Activated CD8-positive, alpha-beta memory T cell treated with anti-CD3 and anti-CD28 coated beads, Interleukin-2, amount 10 ng/mL, durations not matched to agents 7 days and 5 days (primary cell): ENCODE measurements at regions of chr19 and their contacts with region 1.

Region 1: GRCh38 chr19:51259348-51260245 is 8.7 kb downstream of the SIGLECL1 start:
- DNase-seq: peak; percentile 83
- ATAC-seq: peak; percentile 38
- H3K4me3 Mint-ChIP-seq: no peak overlapping the region
- H3K27ac Mint-ChIP-seq: no peak overlapping the region
- H3K4me1 Mint-ChIP-seq: peaks cover 41% of the 10 kb centered on the region
- H3K27me3 Mint-ChIP-seq: peaks cover 37% of the 10 kb centered on the region

Region 2: DNA sequence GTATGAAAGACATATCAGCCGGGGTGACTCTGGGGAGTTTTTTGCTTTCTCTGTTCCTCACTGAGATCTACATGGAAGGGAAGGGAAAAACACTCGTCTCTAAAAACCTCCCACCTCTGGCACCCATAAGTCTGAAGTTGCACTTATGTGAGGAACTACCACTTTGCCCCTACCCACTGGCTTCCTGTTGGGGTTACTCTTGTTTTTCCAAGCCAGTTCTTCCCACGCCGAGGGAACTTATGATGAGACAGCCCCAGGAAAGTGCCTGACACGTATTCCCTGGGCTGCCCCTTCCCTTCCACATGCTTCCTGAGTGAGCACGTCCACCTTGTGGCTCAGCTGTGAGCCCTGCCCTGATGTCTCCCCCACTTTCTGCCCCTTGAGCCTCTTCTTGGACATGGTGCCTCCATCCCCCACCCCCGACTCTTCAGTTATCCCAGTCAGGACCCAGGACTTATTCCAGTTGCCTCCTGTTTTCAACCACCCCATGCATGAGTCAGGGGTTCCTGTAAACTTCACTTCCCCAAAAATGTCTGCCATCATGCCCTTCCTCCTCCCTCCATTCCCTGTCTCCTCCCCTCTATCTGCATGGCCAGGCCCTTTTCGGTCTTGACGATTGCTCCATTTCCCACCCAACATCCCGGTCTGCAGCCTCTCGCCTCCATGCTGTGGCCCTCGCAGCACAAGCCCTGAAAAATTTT is 122.6 kb before region 1 on chr19:
- CTCF ChIA-PET with region 1: no interaction called
- DNase-seq: no peak
- ATAC-seq: no peak
- H3K4me3 Mint-ChIP-seq: no peak overlapping the region
- H3K27ac Mint-ChIP-seq: no peak overlapping the region
- H3K4me1 Mint-ChIP-seq: peaks cover 11% of the 10 kb centered on the region
- H3K27me3 Mint-ChIP-seq: peaks cover 59% of the 10 kb centered on the region

Region 3: DNA sequence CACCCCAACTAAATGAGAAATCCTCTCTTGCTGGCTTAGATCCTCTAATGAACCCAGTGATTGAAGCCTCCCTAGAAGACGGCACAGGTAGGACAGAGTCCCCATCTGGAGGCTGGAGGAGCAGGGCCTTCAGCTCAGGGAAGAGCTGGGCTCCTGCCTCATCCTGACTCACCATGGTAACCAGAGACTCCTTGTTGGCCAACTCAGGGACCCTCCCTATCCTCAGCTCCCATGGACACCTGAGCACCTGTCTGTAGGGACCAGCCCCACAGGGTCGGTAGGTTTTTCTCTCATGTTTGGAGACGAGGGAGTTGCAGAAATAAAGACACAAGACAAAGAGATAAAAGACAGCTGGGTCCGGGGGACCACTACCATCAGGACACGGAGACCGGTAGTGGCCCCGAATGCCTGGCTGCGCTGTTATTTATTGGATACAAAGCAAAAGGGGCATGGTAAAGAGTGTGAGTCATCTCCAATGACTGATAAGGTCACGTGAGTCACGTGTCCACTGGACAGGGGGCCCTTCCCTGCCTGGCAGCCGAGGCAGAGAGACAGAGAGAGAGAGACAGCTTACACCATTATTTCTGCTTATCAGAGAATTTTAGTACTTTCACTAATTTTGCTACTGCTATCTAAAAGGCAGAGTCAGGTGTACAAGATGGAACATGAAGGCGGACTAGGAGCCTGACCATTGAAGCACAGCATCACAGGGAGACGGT is 90.9 kb before region 1 on chr19:
- CTCF ChIA-PET with region 1: interaction called, 54 read pairs
- DNase-seq: no peak
- ATAC-seq: no peak
- H3K4me3 Mint-ChIP-seq: peak overlapping the region; percentile 84
- H3K27ac Mint-ChIP-seq: peak overlapping the region; percentile 37
- H3K4me1 Mint-ChIP-seq: peaks cover 52% of the 10 kb centered on the region
- H3K27me3 Mint-ChIP-seq: peaks cover 37% of the 10 kb centered on the region

Region 4: DNA sequence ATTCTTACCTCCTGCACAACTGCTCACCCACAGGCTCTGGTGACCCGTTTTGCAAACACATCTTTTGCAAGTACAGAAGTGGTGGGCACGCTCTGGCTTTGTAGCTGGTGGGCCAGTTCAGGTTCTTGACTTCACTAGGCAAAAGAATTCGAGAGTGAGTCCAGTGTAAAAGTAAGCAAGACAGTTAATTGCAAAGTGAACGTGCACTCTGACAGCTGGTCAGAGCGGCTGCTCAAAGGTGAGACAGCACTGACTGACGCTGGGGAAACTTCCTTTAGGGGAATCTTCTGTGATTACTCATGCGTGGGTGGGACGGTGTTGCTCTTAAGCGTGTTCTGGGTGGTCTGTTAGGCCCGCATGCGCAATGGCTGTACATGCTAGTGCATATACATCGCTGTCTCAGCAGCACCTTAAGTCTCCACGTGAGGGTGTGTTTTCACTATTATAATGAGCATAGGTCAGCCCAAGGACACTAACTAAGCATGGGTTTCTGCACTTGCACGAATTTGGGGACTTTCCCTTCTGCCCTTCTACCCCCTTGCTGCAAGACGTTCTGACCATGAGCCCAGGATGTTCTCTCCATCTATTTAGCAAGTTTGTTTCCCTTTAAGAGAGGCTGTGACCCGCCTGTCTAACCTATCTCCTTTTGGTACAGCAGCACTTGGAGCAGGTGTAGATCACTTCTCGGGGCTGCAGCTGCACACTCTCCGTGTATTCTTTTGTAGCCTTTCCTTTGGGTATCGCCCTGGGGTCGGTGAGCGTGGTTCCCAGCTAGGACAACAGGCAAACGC is 64.9 kb before region 1 on chr19:
- CTCF ChIA-PET with region 1: interaction called, 28 read pairs
- DNase-seq: peak; percentile 63
- ATAC-seq: peak; percentile 94
- H3K4me3 Mint-ChIP-seq: peak overlapping the region; percentile 37
- H3K27ac Mint-ChIP-seq: no peak overlapping the region
- H3K4me1 Mint-ChIP-seq: peaks cover 27% of the 10 kb centered on the region
- H3K27me3 Mint-ChIP-seq: peaks cover 7% of the 10 kb centered on the region

Region 5: GRCh38 chr19:51227326-51227725 is 32.3 kb before region 1 on chr19:
- CTCF ChIA-PET with region 1: interaction called, 14 read pairs
- DNase-seq: no peak
- ATAC-seq: peak; percentile 51
- H3K4me3 Mint-ChIP-seq: no peak overlapping the region
- H3K27ac Mint-ChIP-seq: peak overlapping the region; percentile 42
- H3K4me1 Mint-ChIP-seq: peaks cover 39% of the 10 kb centered on the region
- H3K27me3 Mint-ChIP-seq: peaks cover 88% of the 10 kb centered on the region

Region 6: DNA sequence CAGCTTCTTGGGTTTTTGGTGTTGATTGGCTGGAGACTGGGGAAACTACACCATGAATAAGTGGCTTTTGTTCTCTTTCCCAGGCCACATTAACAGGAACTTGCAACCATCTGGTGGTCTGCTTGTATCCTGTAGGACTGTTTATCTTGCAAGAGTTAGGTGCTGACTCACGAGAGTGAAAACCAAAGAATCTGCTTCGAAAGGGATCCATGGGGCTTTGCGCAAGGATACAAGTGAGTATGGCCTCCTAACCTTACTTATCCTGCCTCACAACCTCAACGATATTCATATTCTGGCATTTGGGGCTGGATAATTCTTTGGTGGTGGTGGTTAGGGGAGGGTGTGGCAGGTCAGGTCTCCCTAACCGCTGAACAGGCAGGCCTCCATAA is 13.4 kb before region 1 on chr19:
- CTCF ChIA-PET with region 1: interaction called, 38 read pairs
- DNase-seq: peak; percentile 65
- ATAC-seq: peak; percentile 61
- H3K4me3 Mint-ChIP-seq: peak overlapping the region; percentile 47
- H3K27ac Mint-ChIP-seq: peak overlapping the region; percentile 84
- H3K4me1 Mint-ChIP-seq: peaks cover 66% of the 10 kb centered on the region
- H3K27me3 Mint-ChIP-seq: peaks cover 22% of the 10 kb centered on the region

Region 7: GRCh38 chr19:51272183-51272810 is 12.7 kb after region 1 on chr19:
- CTCF ChIA-PET with region 1: interaction called, 13 read pairs
- DNase-seq: peak; percentile 57
- ATAC-seq: peak; percentile 86
- H3K4me3 Mint-ChIP-seq: no peak overlapping the region
- H3K27ac Mint-ChIP-seq: peak overlapping the region; percentile 9
- H3K4me1 Mint-ChIP-seq: peaks cover 15% of the 10 kb centered on the region
- H3K27me3 Mint-ChIP-seq: peaks cover 15% of the 10 kb centered on the region